Activated T-helper 1 cell treated with anti-CD3 and anti-CD28 coated beads, Interleukin-12 subunit alpha, Interleukin-12 subunit beta, Interleukin-2, Interleukin-4 antibody, amounts not matched to agents 30 ng/mL and 10 ng/mL and 1 ng/mL, durations not matched to agents 14 hours and 24 hours and 36 hours (primary cell): ENCODE measurements at regions of chr14 and their contacts with region 1.

Region 1: DNA sequence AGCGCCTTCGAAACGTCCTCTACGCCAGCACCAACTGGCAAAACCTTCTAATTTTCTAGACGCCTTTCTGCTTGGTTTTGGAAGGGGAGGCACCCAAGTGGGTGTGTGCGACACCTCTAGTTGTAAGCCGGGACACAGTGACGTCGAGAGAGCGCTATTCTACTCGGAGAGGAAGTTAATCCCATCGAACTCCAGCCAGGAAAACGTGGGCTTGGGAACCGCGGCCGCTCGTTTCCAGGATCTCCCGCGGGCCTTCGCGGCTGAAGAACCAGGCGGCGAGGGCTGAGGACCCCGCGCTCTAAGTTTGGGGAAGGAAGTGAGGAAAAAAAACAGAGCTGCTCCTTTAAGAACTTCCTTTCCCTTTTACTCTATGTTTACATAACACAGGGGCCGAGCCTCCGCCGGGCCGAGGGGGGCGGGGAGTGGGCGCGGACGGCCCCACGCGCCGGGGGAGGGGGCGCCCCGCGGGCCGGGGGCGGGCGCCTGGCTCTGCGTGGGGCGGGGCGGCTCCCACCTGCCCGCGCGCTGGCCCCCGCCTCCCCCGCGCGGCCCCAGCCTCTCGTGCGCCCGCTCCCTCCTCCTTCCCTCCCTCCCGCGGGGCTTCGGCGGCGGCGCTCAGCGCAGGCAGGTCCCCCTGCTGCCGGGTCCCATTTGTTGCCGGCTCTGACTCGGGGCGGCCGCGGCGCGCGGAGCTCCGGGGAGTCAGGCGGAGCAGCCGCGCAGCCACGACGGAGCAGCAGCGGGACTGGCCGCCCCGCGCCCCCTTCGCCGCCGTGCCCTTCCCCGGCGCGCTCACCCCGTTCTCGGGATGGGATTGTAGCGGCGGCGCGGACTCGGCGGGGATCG is at the start of gene PELI2:
- DNase-seq: peak; percentile 78
- H3K4me3 Mint-ChIP-seq: peak within 1 kb of the TSS; percentile 93
- H3K27ac Mint-ChIP-seq: peak within 1 kb of the TSS; percentile 85
- H3K4me1 Mint-ChIP-seq: peaks cover 41% of the 10 kb centered on the region
- H3K27me3 Mint-ChIP-seq: peaks cover 39% of the 10 kb centered on the region
- total RNA-seq, gene PELI2: 4.4 and 4.5 TPM in 2 replicates

Region 2: GRCh38 chr14:55807059-55807499 is 310.9 kb before region 1 on chr14:
- intact Hi-C with region 1: loop called (anchors 2 kb)
- DNase-seq: peak; percentile 70
- H3K4me3 Mint-ChIP-seq: peak overlapping the region; percentile 45
- H3K27ac Mint-ChIP-seq: peak overlapping the region; percentile 85
- H3K4me1 Mint-ChIP-seq: peaks cover 60% of the 10 kb centered on the region
- H3K27me3 Mint-ChIP-seq: no peaks in the 10 kb centered on the region

Region 3: GRCh38 chr14:56004786-56005185 is 113.2 kb before region 1 on chr14:
- intact Hi-C with region 1: loop called (anchors 10 kb)
- DNase-seq: peak; percentile 6
- H3K4me3 Mint-ChIP-seq: no peak overlapping the region
- H3K27ac Mint-ChIP-seq: no peak overlapping the region
- H3K4me1 Mint-ChIP-seq: peaks cover 38% of the 10 kb centered on the region
- H3K27me3 Mint-ChIP-seq: peaks cover 32% of the 10 kb centered on the region

Region 4: DNA sequence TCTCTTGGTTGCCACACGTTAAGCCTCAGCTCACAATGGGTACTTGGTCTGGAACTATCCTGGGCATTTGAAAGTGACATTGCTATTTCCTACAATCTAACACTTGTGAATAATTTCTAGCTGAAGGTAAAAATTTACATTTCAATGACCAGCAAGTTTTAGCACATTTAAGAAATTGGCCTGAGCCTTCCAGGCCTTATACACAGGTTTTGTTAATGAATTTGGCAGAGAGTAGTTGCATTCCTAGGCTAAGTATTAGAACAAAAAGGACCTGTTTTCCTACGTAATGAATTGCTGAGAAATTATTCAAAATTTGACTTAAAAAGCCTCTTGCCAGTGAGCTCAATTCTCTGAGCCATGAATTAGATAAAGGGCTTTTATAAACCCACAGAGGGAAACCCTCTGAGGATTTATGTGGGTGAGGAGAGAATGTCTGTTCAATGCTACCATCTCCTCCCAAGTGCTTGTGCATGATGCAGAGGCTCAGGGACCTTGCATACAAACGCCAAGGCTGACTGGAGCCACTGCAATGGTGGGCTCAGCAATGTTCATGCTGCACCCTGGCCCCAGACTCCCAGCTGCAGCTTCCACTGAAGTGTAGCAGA is 94.4 kb before region 1 on chr14:
- intact Hi-C with region 1: no loop called
- DNase-seq: no peak
- H3K4me3 Mint-ChIP-seq: no peak overlapping the region
- H3K27ac Mint-ChIP-seq: no peak overlapping the region
- H3K4me1 Mint-ChIP-seq: no peaks in the 10 kb centered on the region
- H3K27me3 Mint-ChIP-seq: peaks cover 15% of the 10 kb centered on the region

Region 5: GRCh38 chr14:56129933-56130332 is 11.9 kb after region 1 on chr14:
- intact Hi-C with region 1: loop called (anchors 1 kb)
- DNase-seq: no peak
- H3K4me3 Mint-ChIP-seq: no peak overlapping the region
- H3K27ac Mint-ChIP-seq: no peak overlapping the region
- H3K4me1 Mint-ChIP-seq: peaks cover 19% of the 10 kb centered on the region
- H3K27me3 Mint-ChIP-seq: peaks cover under 1% of the 10 kb centered on the region

Region 6: GRCh38 chr14:56145965-56146364 is 28.0 kb after region 1 on chr14:
- intact Hi-C with region 1: loop called (anchors 1 kb)
- DNase-seq: no peak
- H3K4me3 Mint-ChIP-seq: no peak overlapping the region
- H3K27ac Mint-ChIP-seq: peak overlapping the region; percentile 9
- H3K4me1 Mint-ChIP-seq: peaks cover 34% of the 10 kb centered on the region
- H3K27me3 Mint-ChIP-seq: no peaks in the 10 kb centered on the region

Region 7: GRCh38 chr14:56172571-56172971 is 54.6 kb after region 1 on chr14:
- intact Hi-C with region 1: loop called (anchors 2 kb)
- DNase-seq: no peak
- H3K4me3 Mint-ChIP-seq: peak overlapping the region; percentile 62
- H3K27ac Mint-ChIP-seq: peak overlapping the region; percentile 80
- H3K4me1 Mint-ChIP-seq: peaks cover 58% of the 10 kb centered on the region
- H3K27me3 Mint-ChIP-seq: no peaks in the 10 kb centered on the region

Region 8: GRCh38 chr14:56202256-56202655 is 84.3 kb after region 1 on chr14:
- intact Hi-C with region 1: loop called (anchors 2 kb)
- DNase-seq: no peak
- H3K4me3 Mint-ChIP-seq: no peak overlapping the region
- H3K27ac Mint-ChIP-seq: no peak overlapping the region
- H3K4me1 Mint-ChIP-seq: peaks cover 9% of the 10 kb centered on the region
- H3K27me3 Mint-ChIP-seq: no peaks in the 10 kb centered on the region